ENCODE measurements at regions of chr2 and their contacts with region 1.

Region 1: DNA sequence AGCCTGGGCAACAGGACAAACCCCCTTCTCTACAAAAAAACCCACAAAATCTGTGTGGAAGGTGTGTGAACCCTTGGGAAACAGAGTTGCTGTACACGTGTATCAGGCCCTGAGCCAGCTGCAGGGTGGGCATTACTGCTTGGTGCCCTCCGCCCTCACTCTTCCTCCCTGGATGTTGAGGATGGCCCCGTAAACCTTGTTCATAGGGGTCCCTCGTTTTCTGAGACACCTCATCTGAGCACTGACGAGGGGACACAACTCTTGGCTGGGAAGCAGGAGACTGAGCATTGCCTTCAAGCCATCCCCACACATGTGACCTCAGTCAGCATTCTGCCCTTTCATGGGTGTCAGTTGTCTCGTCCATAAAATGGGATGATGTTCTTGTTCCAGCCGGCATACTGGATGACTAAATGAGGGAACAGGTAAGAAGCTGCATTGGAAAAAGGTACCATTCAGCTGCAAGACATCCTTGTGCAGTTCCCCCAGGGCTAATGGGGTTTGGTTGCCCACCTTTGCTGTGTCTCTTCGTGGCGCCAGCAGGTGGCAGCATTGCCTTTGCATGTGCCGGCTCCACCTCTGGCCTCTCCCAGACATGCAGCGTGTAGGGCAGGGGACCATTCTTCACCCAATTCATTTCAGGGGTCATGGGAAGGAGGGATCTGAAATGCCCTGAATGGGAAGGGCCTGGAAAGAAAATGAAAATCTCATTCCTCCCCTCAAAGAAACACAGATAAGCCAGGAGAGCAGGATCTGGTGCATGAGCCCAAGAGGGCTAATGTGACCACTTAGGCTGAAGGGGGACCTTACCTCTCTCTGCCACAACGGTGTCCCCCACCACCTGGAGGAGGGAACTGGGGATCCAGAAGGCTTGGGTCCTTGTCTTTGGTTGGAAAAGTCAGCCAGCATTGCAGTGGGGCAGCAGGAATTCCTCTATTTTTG is 36.4 kb upstream of the HAAO start:
- DNase-seq: peak; percentile 91
- ATAC-seq: peak; percentile 92

Region 2: GRCh38 chr2:42602218-42602876 is 226.4 kb before region 1 on chr2:
- intact Hi-C with region 1: no loop called
- DNase-seq: no peak
- ATAC-seq: no peak

Region 3: DNA sequence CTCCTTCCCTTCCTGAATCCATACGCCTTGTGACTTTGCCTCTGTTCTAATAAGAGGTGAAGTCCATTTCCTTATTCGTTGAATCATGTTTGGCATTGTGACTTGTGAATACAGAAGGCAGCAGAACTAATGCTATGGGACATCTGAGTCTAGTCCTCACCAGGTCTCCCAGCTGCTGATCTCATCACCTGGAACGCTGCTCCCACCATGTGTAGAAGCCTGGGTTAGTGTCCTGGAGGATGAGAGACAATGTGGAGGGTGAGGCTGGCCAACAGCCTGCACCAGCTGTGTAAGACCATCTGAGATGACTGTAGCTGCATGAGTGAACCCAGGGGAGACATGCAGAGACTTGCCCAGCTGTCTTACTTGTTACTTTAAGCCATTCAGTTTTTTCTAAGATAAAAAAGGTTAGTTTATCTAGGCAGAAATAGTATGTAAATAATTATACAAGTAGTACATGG is 32.9 kb before region 1 on chr2:
- intact Hi-C with region 1: no loop called
- DNase-seq: no peak
- ATAC-seq: no peak

Region 4: DNA sequence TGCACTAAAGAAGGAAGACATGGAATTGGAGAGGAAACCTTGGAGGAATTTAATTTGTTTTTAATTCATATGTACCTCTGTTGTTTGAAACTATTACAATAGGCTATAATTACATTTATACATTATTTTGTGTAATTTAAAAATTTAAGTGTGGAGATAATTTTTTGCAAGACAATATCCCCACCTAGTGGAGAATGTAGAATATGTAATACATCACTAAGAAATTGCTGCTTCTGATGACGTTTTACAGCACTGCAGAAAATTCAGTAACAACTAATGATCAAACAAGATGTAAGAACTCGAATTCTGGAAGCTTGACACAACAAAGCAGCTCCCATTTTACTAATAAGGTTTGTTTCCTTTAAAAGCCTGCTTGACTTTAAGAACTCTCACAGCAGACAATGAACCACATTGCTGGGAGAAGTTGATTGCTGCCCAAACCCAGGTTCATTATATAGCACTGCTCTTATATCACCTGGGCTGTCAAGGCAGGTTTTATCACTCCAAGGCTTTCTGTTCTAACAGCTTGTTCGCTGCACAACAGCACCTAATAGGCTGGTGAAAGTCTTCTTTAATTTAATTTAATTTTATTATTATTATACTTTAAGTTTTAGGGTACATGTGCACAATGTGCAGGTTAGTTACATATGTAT is 713.7 kb after region 1 on chr2:
- intact Hi-C with region 1: loop called (anchors 5 kb)
- DNase-seq: no peak
- ATAC-seq: no peak

Region 5: GRCh38 chr2:43576981-43577892 is 748.5 kb after region 1 on chr2:
- intact Hi-C with region 1: loop called (anchors 1 kb)
- DNase-seq: no peak
- ATAC-seq: peak; percentile 54

Region 6: DNA sequence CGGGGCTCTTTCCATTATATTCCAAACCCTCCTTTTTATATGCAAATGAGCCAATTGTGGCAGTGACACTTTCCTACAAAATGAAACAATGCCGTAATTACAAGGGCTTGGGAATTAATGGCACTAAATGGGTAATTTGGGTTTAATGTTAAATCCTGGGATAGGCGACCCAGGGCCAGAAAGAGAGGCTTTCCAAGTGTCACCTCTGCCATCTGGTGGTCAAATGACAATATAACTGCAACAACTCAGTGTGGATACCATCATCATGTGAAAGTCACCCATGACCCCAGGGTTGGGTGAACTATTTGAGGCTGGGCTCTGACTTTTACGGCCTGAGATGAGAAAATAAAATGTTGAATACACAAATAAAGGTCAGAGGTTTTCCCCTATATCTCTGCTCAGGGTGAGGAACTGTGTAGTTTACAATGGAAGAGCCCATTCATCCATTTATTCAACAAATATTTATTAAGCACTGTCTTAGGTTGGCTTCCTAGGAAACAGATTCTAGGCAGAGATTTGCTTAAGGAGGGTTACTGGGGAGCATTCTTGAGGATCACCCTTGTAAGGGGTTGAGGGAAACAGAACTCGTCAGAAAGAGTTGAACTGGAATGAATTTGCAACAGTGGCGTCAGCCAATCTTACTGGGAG is 780.7 kb after region 1 on chr2:
- intact Hi-C with region 1: loop called (anchors 5 kb)
- DNase-seq: no peak
- ATAC-seq: peak; percentile 61

Measured in Right ventricle myocardium inferior (tissue), 1 donor.